Psoas muscle (tissue), 8 donors: ENCODE measurements at regions of chr3 and their contacts with region 1.

Region 1: GRCh38 chr3:14660907-14661306 is 9.3 kb downstream of the CCDC174 start:
- DNase-seq: no peak
- ATAC-seq: no peak
- H3K4me3 ChIP-seq: no peak overlapping the region
- H3K27ac ChIP-seq: no peak overlapping the region
- H3K4me1 ChIP-seq: no peaks in the 10 kb centered on the region
- H3K27me3 ChIP-seq: no peaks in the 10 kb centered on the region
- CTCF ChIP-seq: no peak

Region 2: DNA sequence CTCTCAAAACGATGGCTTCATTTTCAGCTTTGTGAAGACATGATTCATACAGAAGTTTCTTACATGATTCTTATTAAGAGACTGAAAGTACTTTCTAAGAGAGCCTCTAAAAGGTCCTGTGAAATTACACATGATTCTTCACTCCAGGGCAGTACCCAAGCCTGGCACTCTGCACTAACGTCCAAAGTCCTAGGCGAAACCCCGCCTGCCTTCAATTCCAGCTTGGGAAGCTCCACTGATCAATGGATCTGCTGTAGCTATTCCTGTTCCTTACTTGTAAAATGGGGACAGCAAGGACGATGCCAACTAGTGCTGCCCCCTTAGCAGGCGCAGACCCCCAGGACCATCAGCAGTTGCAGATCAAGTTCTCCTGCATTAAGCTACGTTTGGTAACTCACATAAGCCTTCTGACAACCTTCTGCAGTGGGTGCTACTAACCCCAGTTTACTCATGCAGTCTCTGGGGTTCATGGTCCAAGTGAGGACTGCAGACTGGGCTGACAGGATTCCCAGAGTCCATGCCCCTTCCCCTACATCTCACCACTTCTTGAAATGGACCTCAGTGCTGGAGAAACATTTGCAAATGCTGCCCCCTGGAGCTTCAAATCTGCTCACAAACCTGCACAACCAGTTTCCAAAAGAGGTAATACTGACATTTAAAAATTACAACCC is 546.8 kb before region 1 on chr3:
- intact Hi-C with region 1: loop called in 1 of 2 experiments (anchors 10 kb)
- DNase-seq: no peak
- ATAC-seq: no peak
- H3K4me3 ChIP-seq: no peak overlapping the region
- H3K27ac ChIP-seq: no peak overlapping the region
- H3K4me1 ChIP-seq: no peaks in the 10 kb centered on the region
- H3K27me3 ChIP-seq: no peaks in the 10 kb centered on the region
- CTCF ChIP-seq: no peak

Region 3: GRCh38 chr3:15164340-15164739 is 503.4 kb after region 1 on chr3:
- intact Hi-C with region 1: no loop called
- DNase-seq: no peak
- ATAC-seq: no peak
- H3K4me3 ChIP-seq: no peak overlapping the region
- H3K27ac ChIP-seq: no peak overlapping the region
- H3K4me1 ChIP-seq: no peaks in the 10 kb centered on the region
- H3K27me3 ChIP-seq: no peaks in the 10 kb centered on the region
- CTCF ChIP-seq: no peak

Region 4: GRCh38 chr3:15246186-15246585 is 585.3 kb after region 1 on chr3:
- intact Hi-C with region 1: loop called in 1 of 2 experiments (anchors 5 kb)
- DNase-seq: no peak
- ATAC-seq: no peak
- H3K4me3 ChIP-seq: no peak overlapping the region
- H3K27ac ChIP-seq: no peak overlapping the region
- H3K4me1 ChIP-seq: no peaks in the 10 kb centered on the region
- H3K27me3 ChIP-seq: no peaks in the 10 kb centered on the region
- CTCF ChIP-seq: no peak